Heart right ventricle (tissue), 16 donors: ENCODE measurements at regions of chr9 and their contacts with region 1.

Region 1: GRCh38 chr9:26426551-26427131 is 466.0 kb downstream of the CAAP1 start:
- DNase-seq: no peak
- ATAC-seq: no peak
- H3K4me3 ChIP-seq: no peak overlapping the region
- H3K27ac ChIP-seq: no peak overlapping the region
- H3K4me1 ChIP-seq: no peaks in the 10 kb centered on the region
- H3K27me3 ChIP-seq: no peaks in the 10 kb centered on the region
- CTCF ChIP-seq: no peak

Region 2: DNA sequence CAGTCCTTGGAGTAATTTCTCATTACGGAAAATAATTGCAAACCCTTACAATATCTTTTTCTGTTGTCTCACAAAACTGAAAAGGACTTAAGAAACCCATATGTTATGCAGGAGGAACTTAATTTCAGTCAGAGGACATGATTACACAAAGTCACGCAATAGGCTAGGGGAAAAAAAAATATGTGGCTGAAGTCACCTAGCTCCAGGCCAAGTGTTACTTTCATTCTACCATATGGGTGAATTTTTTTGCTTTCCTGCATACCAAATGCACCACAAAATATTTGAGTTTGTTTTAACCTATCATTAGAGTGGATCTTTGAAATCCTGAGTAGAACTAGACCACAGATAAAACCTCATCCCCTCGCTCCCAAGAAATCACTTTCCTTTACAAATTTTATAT is 57.5 kb before region 1 on chr9:
- intact Hi-C with region 1: loop called in 1 of 10 experiments (anchors 10 kb)
- DNase-seq: no peak
- ATAC-seq: no peak
- H3K4me3 ChIP-seq: no peak overlapping the region
- H3K27ac ChIP-seq: no peak overlapping the region
- H3K4me1 ChIP-seq: no peaks in the 10 kb centered on the region
- H3K27me3 ChIP-seq: no peaks in the 10 kb centered on the region
- CTCF ChIP-seq: no peak

Region 3: GRCh38 chr9:26437056-26437711 is 10.5 kb after region 1 on chr9:
- intact Hi-C with region 1: loop called in 1 of 10 experiments (anchors 2 kb)
- DNase-seq: no peak
- ATAC-seq: no peak
- H3K4me3 ChIP-seq: no peak overlapping the region
- H3K27ac ChIP-seq: no peak overlapping the region
- H3K4me1 ChIP-seq: no peaks in the 10 kb centered on the region
- H3K27me3 ChIP-seq: no peaks in the 10 kb centered on the region
- CTCF ChIP-seq: no peak

Region 4: DNA sequence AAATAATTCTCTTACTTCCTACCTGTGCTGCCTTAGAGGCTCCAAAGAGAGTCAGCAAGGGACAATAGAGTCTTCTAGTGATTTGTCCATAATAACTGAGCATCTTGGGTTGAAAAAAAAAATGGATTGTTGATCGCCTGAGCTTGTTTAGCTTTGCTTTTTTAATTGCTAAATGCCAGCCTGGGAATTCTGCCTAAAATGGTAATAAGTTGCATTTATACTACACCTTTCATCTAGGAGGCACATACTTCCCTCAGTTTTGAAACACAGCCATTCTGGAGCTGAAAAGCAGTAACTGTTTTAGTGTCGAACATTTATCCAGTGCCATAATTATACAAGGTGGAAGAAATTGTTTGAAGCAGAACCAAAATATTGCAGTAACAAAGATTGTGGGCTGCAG is 44.6 kb after region 1 on chr9:
- intact Hi-C with region 1: no loop called
- DNase-seq: no peak
- ATAC-seq: no peak
- H3K4me3 ChIP-seq: no peak overlapping the region
- H3K27ac ChIP-seq: no peak overlapping the region
- H3K4me1 ChIP-seq: no peaks in the 10 kb centered on the region
- H3K27me3 ChIP-seq: no peaks in the 10 kb centered on the region
- CTCF ChIP-seq: no peak